ENCODE measurements at regions of chr1 and their contacts with region 1.

Region 1: GRCh38 chr1:179081687-179082332 is at the start of gene TOR3A:
- DNase-seq: peak; percentile 93 to 95 (median 94)
- ATAC-seq: peak; percentile 91
- H3K4me3 ChIP-seq: peak within 1 kb of the TSS; percentile 63
- H3K27ac ChIP-seq: peak within 1 kb of the TSS; percentile 78
- H3K4me1 ChIP-seq: peaks cover 17 to 22% of the 10 kb centered on the region in 2 experiments; a peak in 4 of 5 replicates
- H3K27me3 ChIP-seq: no peaks in the 10 kb centered on the region
- CTCF ChIP-seq: no peak
- EP300 ChIP-seq: no peak
- POLR2A ChIP-seq: peak; percentile 88
- RAD21 ChIP-seq: no peak
- polyA plus RNA-seq, gene TOR3A: 7.9 to 13.0 TPM

Region 2: GRCh38 chr1:178725603-178726517 is 355.9 kb before region 1 on chr1:
- CTCF ChIA-PET with region 1: interaction called, 10 read pairs
- POLR2A ChIA-PET with region 1: no interaction called
- in situ Hi-C with region 1: no loop called
- intact Hi-C with region 1: no loop called
- DNase-seq: peak; percentile 77 to 90 (median 79)
- ATAC-seq: peak; percentile 89
- H3K4me3 ChIP-seq: peak overlapping the region; percentile 63
- H3K27ac ChIP-seq: peak overlapping the region; percentile 47; the same call in 2 of the 3 replicates
- H3K4me1 ChIP-seq: peaks cover 0 to 16% of the 10 kb centered on the region in 2 experiments; a peak in 4 of 5 replicates
- H3K27me3 ChIP-seq: 0 out of 5 replicates have a peak, but pooled peaks cover 0 to 5% of the 10 kb centered on the region in 2 experiments
- CTCF ChIP-seq: peak in 1 of 3 experiments; percentile 41; a peak in 1 of 6 replicates
- EP300 ChIP-seq: no peak
- POLR2A ChIP-seq: no peak
- RAD21 ChIP-seq: peak in 1 of 2 experiments; percentile 23; a peak in 1 of 4 replicates

Region 3: GRCh38 chr1:179046808-179047635 is 34.8 kb before region 1 on chr1:
- CTCF ChIA-PET with region 1: no interaction called
- POLR2A ChIA-PET with region 1: no interaction called
- in situ Hi-C with region 1: no loop called
- intact Hi-C with region 1: loop called (anchors 1 kb)
- DNase-seq: peak; percentile 86 to 98 (median 92)
- ATAC-seq: peak; percentile 89
- H3K4me3 ChIP-seq: no peak overlapping the region
- H3K27ac ChIP-seq: peak overlapping the region; percentile 87
- H3K4me1 ChIP-seq: peaks cover 33 to 45% of the 10 kb centered on the region in 2 experiments
- H3K27me3 ChIP-seq: no peaks in the 10 kb centered on the region
- CTCF ChIP-seq: no peak
- EP300 ChIP-seq: peak; percentile 100
- POLR2A ChIP-seq: peak; percentile 58; the same call in 1 of the 2 replicates
- RAD21 ChIP-seq: peak in 1 of 2 experiments; percentile 34; a peak in 2 of 4 replicates

Region 4: GRCh38 chr1:179251675-179252074 is 169.9 kb after region 1 on chr1:
- CTCF ChIA-PET with region 1: no interaction called
- POLR2A ChIA-PET with region 1: no interaction called
- in situ Hi-C with region 1: no loop called
- intact Hi-C with region 1: loop called (anchors 1 kb)
- DNase-seq: peak in 2 of 4 experiments; percentile 28 to 44
- ATAC-seq: peak; percentile 84
- H3K4me3 ChIP-seq: no peak overlapping the region
- H3K27ac ChIP-seq: no peak overlapping the region
- H3K4me1 ChIP-seq: no peaks in the 10 kb centered on the region; a peak in 1 of 5 replicates
- H3K27me3 ChIP-seq: no peaks in the 10 kb centered on the region; a peak in 1 of 5 replicates
- CTCF ChIP-seq: peak; percentile 55 to 85 (median 56); a peak in 4 of 6 replicates
- EP300 ChIP-seq: no peak
- POLR2A ChIP-seq: no peak
- RAD21 ChIP-seq: peak; percentile 80 to 94

Region 5: GRCh38 chr1:179365320-179366092 is 283.7 kb after region 1 on chr1 and contains the start of gene AXDND1:
- CTCF ChIA-PET with region 1: interaction called, 12 read pairs
- POLR2A ChIA-PET with region 1: no interaction called
- in situ Hi-C with region 1: loop called (anchors 10 kb)
- intact Hi-C with region 1: loop called (anchors 1 kb)
- DNase-seq: peak; percentile 86 to 94 (median 90)
- ATAC-seq: peak; percentile 97
- H3K4me3 ChIP-seq: peak within 1 kb of the TSS; percentile 57
- H3K27ac ChIP-seq: peak within 1 kb of the TSS; percentile 96
- H3K4me1 ChIP-seq: peaks cover 14 to 16% of the 10 kb centered on the region in 2 experiments
- H3K27me3 ChIP-seq: no peaks in the 10 kb centered on the region
- CTCF ChIP-seq: peak in 2 of 3 experiments; percentile 40 to 54; a peak in 4 of 6 replicates
- EP300 ChIP-seq: 0 out of 2 replicates have a peak, but pooled peaks have one; percentile 24
- POLR2A ChIP-seq: peak; percentile 76
- RAD21 ChIP-seq: peak; percentile 6 to 22; a peak in 2 of 4 replicates
- polyA plus RNA-seq, gene AXDND1: 0.03 to 0.13 TPM

Region 6: GRCh38 chr1:179809506-179810366 is 727.9 kb after region 1 on chr1:
- CTCF ChIA-PET with region 1: interaction called, 13 read pairs
- POLR2A ChIA-PET with region 1: no interaction called
- in situ Hi-C with region 1: no loop called
- intact Hi-C with region 1: loop called (anchors 10 kb)
- DNase-seq: peak; percentile 74 to 82 (median 79)
- ATAC-seq: peak; percentile 80
- H3K4me3 ChIP-seq: no peak overlapping the region
- H3K27ac ChIP-seq: no peak overlapping the region
- H3K4me1 ChIP-seq: peaks cover 0 to 18% of the 10 kb centered on the region in 2 experiments; a peak in 4 of 5 replicates
- H3K27me3 ChIP-seq: peaks cover 49 to 83% of the 10 kb centered on the region in 2 experiments
- CTCF ChIP-seq: peak; percentile 87 to 97 (median 90)
- EP300 ChIP-seq: no peak
- POLR2A ChIP-seq: no peak
- RAD21 ChIP-seq: peak; percentile 59 to 78

Measured in K562 (cell line).